ENCODE measurements at regions of chr17 and their contacts with region 1.

Region 1: GRCh38 chr17:75109407-75110233 is at the start of gene ARMC7:
- H3K4me3 Mint-ChIP-seq: peak within 1 kb of the TSS; percentile 87
- H3K27ac Mint-ChIP-seq: peak within 1 kb of the TSS; percentile 88
- H3K4me1 Mint-ChIP-seq: peaks cover 48% of the 10 kb centered on the region
- H3K27me3 Mint-ChIP-seq: peaks cover 14% of the 10 kb centered on the region

Region 2: GRCh38 chr17:75077496-75078283 is 31.9 kb before region 1 on chr17:
- intact Hi-C with region 1: loop called (anchors 5 kb)
- H3K4me3 Mint-ChIP-seq: peak overlapping the region; percentile 72
- H3K27ac Mint-ChIP-seq: peak overlapping the region; percentile 93
- H3K4me1 Mint-ChIP-seq: peaks cover 76% of the 10 kb centered on the region
- H3K27me3 Mint-ChIP-seq: peaks cover 10% of the 10 kb centered on the region

Region 3: DNA sequence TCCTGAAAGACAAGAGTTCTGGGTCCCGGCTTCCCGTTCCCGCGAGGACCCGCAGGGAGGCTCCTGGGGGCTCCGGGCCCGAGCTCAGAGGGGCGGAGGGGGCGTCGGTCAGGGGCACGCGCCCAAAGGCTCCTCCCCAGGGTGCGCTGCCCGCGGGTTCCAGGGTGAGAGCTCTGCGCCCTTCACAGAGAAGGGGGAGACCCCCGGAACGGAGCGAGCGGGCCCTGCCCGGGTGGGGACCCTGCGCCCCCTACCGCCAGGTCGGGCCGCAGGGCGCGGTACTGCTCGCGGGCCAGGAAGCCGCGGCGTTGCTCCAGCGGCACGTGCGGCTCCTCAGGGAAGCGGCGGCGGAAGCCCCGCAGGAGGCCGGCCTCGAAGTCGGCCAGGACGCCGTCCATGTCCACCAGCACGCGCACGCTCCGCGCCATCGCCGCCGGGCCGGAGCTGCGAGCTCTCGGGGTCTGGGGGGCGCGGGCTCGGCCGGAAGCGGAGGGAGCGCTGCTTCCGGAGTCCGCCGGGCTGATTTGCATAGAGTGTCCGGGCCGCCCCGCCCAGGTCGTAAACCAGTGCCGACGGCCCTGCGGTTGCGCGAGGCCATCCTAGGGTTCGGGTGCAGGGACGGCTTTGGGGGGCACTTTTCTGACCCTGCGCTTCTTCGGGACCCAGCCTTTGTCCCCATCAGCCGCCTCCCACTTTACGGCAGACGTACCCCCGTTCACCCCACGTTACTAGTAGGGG is 21.8 kb after region 1 on chr17 and contains the start of gene NT5C:
- intact Hi-C with region 1: loop called (anchors 2 kb)
- H3K4me3 Mint-ChIP-seq: peak within 1 kb of the TSS; percentile 85
- H3K27ac Mint-ChIP-seq: peak within 1 kb of the TSS; percentile 85
- H3K4me1 Mint-ChIP-seq: peaks cover 23% of the 10 kb centered on the region
- H3K27me3 Mint-ChIP-seq: no peaks in the 10 kb centered on the region

Region 4: GRCh38 chr17:75163074-75163473 is 53.5 kb after region 1 on chr17:
- intact Hi-C with region 1: no loop called
- H3K4me3 Mint-ChIP-seq: no peak overlapping the region
- H3K27ac Mint-ChIP-seq: no peak overlapping the region
- H3K4me1 Mint-ChIP-seq: no peaks in the 10 kb centered on the region
- H3K27me3 Mint-ChIP-seq: no peaks in the 10 kb centered on the region

Region 5: DNA sequence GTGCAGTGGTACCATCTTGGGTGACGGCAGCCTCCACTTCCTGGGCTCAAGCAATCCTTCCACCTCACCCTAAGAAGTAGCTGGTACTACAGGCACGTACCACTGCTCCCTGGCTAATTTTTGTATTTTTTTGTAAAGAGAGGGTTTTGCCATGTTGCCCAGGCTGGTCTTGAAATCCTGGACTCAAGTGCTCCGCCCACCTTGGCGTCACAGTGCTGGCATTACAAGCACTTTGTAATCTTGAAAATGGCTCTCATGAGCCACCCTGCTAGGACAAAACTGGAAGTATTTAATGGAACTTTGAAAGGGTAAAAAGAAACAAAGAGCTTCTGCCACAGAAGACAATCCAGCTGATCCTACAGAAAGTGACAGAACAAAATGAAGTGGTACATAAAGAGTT is 63.9 kb after region 1 on chr17:
- intact Hi-C with region 1: loop called (anchors 1 kb)
- H3K4me3 Mint-ChIP-seq: no peak overlapping the region
- H3K27ac Mint-ChIP-seq: no peak overlapping the region
- H3K4me1 Mint-ChIP-seq: no peaks in the 10 kb centered on the region
- H3K27me3 Mint-ChIP-seq: no peaks in the 10 kb centered on the region